ENCODE measurements at regions of chr3 and their contacts with region 1.

Region 1: GRCh38 chr3:179015551-179016020 is 56.0 kb downstream of the ZMAT3 start:
- DNase-seq: peak; percentile 59
- H3K4me3 ChIP-seq: no peak overlapping the region
- H3K27ac ChIP-seq: no peak overlapping the region
- H3K27me3 ChIP-seq: no peaks in the 10 kb centered on the region
- CTCF ChIP-seq: peak; percentile 84

Region 2: DNA sequence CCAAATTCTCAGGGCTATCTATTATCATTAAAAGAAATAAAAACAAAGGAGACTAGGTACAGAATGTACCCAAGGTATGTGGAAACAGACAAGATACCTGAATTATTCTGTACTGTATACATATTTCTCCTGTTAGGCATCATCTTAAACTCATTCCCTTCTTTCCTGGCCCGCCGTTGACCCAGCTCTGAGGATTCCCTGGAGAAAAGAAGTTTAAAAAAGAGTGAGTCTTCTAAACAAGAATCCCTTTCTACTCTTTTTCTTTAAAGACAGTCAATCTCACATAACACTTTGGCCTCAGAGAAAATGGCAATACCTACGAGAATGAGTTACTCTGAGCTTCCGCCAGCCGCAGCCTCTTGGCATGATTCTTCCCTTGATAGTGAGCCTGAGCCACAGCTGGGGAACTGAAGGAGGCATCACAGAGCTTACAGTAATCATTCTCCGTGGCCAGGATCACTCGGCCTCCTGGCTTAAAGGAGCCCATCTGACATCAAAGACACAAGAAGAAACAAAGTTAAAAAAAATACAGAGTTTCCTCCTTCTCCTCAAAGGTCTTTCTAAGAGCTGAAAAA is 11.8 kb after region 1 on chr3:
- CTCF ChIA-PET with region 1: interaction called, 43 read pairs
- POLR2A ChIA-PET with region 1: interaction called, 4 read pairs
- DNase-seq: no peak
- H3K4me3 ChIP-seq: no peak overlapping the region
- H3K27ac ChIP-seq: no peak overlapping the region
- H3K27me3 ChIP-seq: no peaks in the 10 kb centered on the region
- CTCF ChIP-seq: 0 out of 2 replicates have a peak, but pooled peaks have one; percentile 5

Region 3: GRCh38 chr3:179071550-179072397 is 56.2 kb after region 1 on chr3 and contains the start of gene ZMAT3:
- CTCF ChIA-PET with region 1: interaction called, 22 read pairs
- POLR2A ChIA-PET with region 1: no interaction called
- DNase-seq: peak; percentile 54
- H3K4me3 ChIP-seq: peak within 1 kb of the TSS; percentile 90
- H3K27ac ChIP-seq: peak within 1 kb of the TSS; percentile 84
- H3K27me3 ChIP-seq: no peaks in the 10 kb centered on the region
- CTCF ChIP-seq: no peak
- polyA plus RNA-seq, gene ZMAT3: 46.2 and 51.9 TPM in 2 replicates

Region 4: GRCh38 chr3:179098388-179099077 is 82.9 kb after region 1 on chr3:
- CTCF ChIA-PET with region 1: interaction called, 20 read pairs
- POLR2A ChIA-PET with region 1: no interaction called
- DNase-seq: peak; percentile 33
- H3K4me3 ChIP-seq: peak overlapping the region; percentile 38
- H3K27ac ChIP-seq: no peak overlapping the region
- H3K27me3 ChIP-seq: no peaks in the 10 kb centered on the region
- CTCF ChIP-seq: peak; percentile 42

Region 5: DNA sequence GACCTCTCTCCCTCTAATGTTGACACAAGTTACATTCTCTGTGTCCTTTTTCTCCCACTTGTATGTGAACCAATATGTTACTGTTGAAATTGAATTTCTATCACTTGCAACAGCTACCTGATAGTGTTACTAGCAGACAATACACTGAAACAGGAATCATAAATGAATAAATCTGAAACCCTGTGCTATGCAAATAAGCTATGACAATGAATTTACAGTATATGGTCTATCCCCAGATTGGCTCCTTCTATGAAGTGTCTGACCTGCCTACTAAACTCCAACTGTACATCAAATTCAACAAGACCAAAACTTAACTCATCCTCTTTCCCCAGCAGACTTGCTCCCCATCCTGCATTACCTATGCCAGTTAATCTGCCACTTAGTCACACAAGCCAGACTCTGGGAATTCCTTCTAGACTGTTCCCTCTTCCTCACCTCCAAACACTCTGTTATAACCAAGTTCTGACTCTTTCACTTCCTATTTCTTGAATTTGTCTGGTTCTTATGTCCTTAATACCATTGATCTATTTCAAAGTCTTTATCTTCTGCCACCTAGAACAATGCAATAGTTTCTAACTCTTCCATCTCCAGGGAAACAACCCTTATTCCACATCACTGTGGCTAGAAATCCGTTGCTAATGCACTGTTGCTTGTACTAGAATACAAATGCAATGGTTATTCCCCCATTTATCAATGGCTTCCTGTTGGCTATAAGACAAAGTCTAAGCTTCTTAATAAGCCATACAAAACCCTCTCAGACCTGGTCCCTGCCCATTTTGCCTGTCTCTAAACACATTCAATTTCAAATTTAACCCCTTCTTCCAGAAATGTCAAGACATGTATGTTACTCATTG is 293.9 kb after region 1 on chr3:
- CTCF ChIA-PET with region 1: interaction called, 194 read pairs
- POLR2A ChIA-PET with region 1: no interaction called
- DNase-seq: no peak
- H3K4me3 ChIP-seq: no peak overlapping the region
- H3K27ac ChIP-seq: no peak overlapping the region
- H3K27me3 ChIP-seq: no peaks in the 10 kb centered on the region
- CTCF ChIP-seq: no peak

Region 6: GRCh38 chr3:179688850-179689249 is 673.3 kb after region 1 on chr3:
- CTCF ChIA-PET with region 1: no interaction called
- POLR2A ChIA-PET with region 1: no interaction called
- DNase-seq: no peak
- H3K4me3 ChIP-seq: no peak overlapping the region
- H3K27ac ChIP-seq: no peak overlapping the region
- H3K27me3 ChIP-seq: no peaks in the 10 kb centered on the region
- CTCF ChIP-seq: no peak